CD8-positive, alpha-beta T cell (primary cell): ENCODE measurements at regions of chr15 and their contacts with region 1.

Region 1: DNA sequence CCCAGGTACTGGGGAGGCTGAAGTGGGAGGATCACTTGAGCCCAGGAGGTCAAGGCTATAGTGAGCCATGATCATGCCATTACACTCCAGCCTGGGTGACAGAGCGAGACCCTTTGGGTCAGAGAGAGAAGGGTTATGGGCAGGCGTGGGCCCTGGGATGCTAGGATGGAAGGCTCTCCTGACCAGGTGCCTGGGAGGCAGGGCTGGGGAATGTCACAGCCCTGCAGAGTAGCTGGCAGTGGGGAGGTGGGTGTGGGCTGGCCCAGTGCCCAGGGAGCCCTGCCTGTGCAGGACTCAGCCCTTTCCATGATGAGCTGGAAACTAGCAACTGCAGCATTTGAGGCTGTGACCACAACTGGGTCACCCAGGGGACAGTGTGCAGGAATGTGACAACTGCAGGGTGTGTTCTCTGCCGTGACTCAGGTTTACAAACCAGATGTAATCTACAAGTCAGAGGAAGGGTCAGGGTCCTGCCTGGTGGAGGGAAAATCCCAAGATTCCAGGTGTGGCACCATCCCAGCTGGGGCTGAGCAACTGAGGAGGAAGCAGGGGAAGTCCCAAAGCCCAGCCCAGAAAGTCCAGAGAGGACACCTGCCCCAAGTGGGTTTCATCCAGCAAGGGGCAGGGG is 45.4 kb downstream of the SLC28A1 start:
- DNase-seq: no peak
- ATAC-seq: no peak
- H3K4me3 ChIP-seq: no peak overlapping the region
- H3K4me3 Mint-ChIP-seq: no peak overlapping the region
- H3K27ac ChIP-seq: no peak overlapping the region
- H3K27ac Mint-ChIP-seq: no peak overlapping the region
- H3K4me1 ChIP-seq: no peaks in the 10 kb centered on the region
- H3K4me1 Mint-ChIP-seq: peaks cover 5% of the 10 kb centered on the region
- H3K27me3 ChIP-seq: no peaks in the 10 kb centered on the region
- H3K27me3 Mint-ChIP-seq: no peaks in the 10 kb centered on the region
- CTCF ChIP-seq: no peak

Region 2: GRCh38 chr15:84761607-84762131 is 168.2 kb before region 1 on chr15:
- CTCF ChIA-PET with region 1: no interaction called
- POLR2A ChIA-PET with region 1: no interaction called
- intact Hi-C with region 1: loop called in 1 of 2 experiments (anchors 5 kb)
- DNase-seq: peak in 1 of 9 experiments; percentile 19
- ATAC-seq: peak; percentile 72
- H3K4me3 ChIP-seq: no peak overlapping the region
- H3K4me3 Mint-ChIP-seq: no peak overlapping the region
- H3K27ac ChIP-seq: peak overlapping the region; percentile 22 to 48
- H3K27ac Mint-ChIP-seq: no peak overlapping the region
- H3K4me1 ChIP-seq: peaks cover 37% of the 10 kb centered on the region
- H3K4me1 Mint-ChIP-seq: peaks cover 11% of the 10 kb centered on the region
- H3K27me3 ChIP-seq: no peaks in the 10 kb centered on the region
- H3K27me3 Mint-ChIP-seq: no peaks in the 10 kb centered on the region
- CTCF ChIP-seq: no peak

Region 3: DNA sequence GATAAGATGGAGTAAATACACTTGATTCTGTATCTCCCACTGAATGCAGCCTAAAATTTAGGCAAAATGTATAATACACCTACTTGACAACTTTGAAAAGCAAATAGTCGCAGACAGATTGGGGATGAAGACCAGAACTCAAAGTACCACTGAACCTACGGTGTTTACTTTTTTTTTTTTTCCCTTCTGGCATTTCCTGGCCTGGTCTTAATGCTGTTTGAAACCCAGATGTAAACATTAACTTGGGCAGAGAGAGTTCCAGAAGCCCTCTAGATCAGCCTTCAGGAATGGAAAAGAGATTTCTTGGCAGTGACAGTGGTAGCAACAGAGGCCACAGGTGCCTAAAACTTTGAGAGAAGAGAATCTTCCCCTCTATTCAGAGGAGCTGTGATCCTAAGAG is 84.9 kb before region 1 on chr15:
- CTCF ChIA-PET with region 1: interaction called, 3 read pairs
- POLR2A ChIA-PET with region 1: no interaction called
- intact Hi-C with region 1: loop called in 1 of 2 experiments (anchors 1 kb)
- DNase-seq: no peak
- ATAC-seq: no peak
- H3K4me3 ChIP-seq: no peak overlapping the region
- H3K4me3 Mint-ChIP-seq: no peak overlapping the region
- H3K27ac ChIP-seq: no peak overlapping the region
- H3K27ac Mint-ChIP-seq: no peak overlapping the region
- H3K4me1 ChIP-seq: no peaks in the 10 kb centered on the region
- H3K4me1 Mint-ChIP-seq: no peaks in the 10 kb centered on the region
- H3K27me3 ChIP-seq: peaks cover 0 to 2% of the 10 kb centered on the region in 2 experiments
- H3K27me3 Mint-ChIP-seq: no peaks in the 10 kb centered on the region
- CTCF ChIP-seq: no peak